B cell (primary cell): ENCODE measurements at regions of chr6 and their contacts with region 1.

Region 1: GRCh38 chr6:43575772-43576551 is at the starts of genes POLH and XPO5:
- DNase-seq: peak; percentile 95
- ATAC-seq: peak; percentile 94
- H3K4me3 ChIP-seq: peak within 1 kb of the TSS; percentile 81 to 99 (median 98)
- H3K4me3 Mint-ChIP-seq: peak within 1 kb of the TSS; percentile 94
- H3K27ac ChIP-seq: peak within 1 kb of the TSS; percentile 49 to 80
- H3K27ac Mint-ChIP-seq: peak within 1 kb of the TSS; percentile 91
- H3K4me1 ChIP-seq: peaks cover 28 to 40% of the 10 kb centered on the region in 2 donors
- H3K4me1 Mint-ChIP-seq: peaks cover 36% of the 10 kb centered on the region
- H3K27me3 ChIP-seq: no peaks in the 10 kb centered on the region
- H3K27me3 Mint-ChIP-seq: no peaks in the 10 kb centered on the region
- CTCF ChIP-seq: no peak
- total RNA-seq, gene POLH: 24.8 and 26.4 TPM in 2 replicates
- total RNA-seq, gene XPO5: 45.7 and 48.1 TPM in 2 replicates

Region 2: GRCh38 chr6:43516697-43517504 is 59.1 kb before region 1 on chr6 and contains the starts of genes POLR1C and YIPF3:
- CTCF ChIA-PET with region 1: no interaction called
- POLR2A ChIA-PET with region 1: no interaction called
- intact Hi-C with region 1: loop called (anchors 2 kb)
- DNase-seq: peak; percentile 97
- ATAC-seq: peak; percentile 96
- H3K4me3 ChIP-seq: peak within 1 kb of the TSS; percentile 78 to 98 (median 91)
- H3K4me3 Mint-ChIP-seq: no peak within 1 kb of the TSS
- H3K27ac ChIP-seq: peak within 1 kb of the TSS; percentile 65 to 91
- H3K27ac Mint-ChIP-seq: no peak within 1 kb of the TSS
- H3K4me1 ChIP-seq: peaks cover 28 to 36% of the 10 kb centered on the region in 2 donors
- H3K4me1 Mint-ChIP-seq: peaks cover 27% of the 10 kb centered on the region
- H3K27me3 ChIP-seq: no peaks in the 10 kb centered on the region
- H3K27me3 Mint-ChIP-seq: no peaks in the 10 kb centered on the region
- CTCF ChIP-seq: no peak
- total RNA-seq, gene POLR1C: 42.0 and 43.3 TPM in 2 replicates
- total RNA-seq, gene YIPF3: 82.1 and 92.6 TPM in 2 replicates

Region 3: DNA sequence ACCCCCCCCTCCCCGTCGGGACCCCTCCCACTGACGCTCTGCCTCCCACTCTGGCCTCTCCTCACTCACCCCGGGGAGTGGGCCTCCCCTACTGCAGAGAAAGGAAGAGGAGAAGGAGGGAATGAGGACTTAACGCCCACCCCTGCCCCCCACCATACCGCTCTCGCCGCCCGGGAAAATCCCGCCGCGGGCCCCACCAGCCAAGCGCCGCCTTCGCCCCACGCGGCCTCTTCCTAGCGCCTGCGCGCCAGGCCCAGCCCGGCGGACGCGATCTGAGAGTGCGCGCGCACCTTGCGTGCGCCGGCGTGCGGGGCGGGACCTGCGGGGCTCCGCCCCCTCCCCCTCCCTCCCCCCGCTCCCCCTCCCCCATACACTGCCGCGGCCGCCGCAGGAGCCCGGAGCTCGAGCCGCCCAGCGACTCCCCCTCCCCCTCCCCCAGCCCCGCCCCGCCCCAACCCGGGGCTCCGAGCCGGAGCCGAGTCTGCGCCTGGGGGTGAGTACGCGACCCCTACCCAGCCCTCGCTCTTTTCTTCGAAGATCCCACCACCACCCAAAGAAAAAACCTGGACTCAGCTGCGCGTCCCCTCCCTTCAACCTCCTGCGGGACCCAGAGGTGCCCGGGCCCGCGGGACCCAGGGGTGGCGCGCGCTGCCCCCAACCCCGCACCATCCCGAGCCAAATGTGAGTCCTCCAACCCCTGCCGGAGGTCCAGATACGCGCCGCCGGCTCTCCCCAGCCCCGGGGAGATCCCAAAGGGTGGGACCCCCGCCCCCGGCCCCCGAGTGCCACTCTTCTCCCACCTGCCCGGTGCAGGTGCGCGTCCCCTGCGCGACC is 551.4 kb after region 1 on chr6 and contains the starts of genes MRPL14 and TMEM63B:
- CTCF ChIA-PET with region 1: no interaction called
- POLR2A ChIA-PET with region 1: no interaction called
- intact Hi-C with region 1: loop called (anchors 5 kb)
- DNase-seq: peak; percentile 94
- ATAC-seq: peak; percentile 91
- H3K4me3 ChIP-seq: peak within 1 kb of the TSS; percentile 62 to 98 (median 91)
- H3K4me3 Mint-ChIP-seq: peak within 1 kb of the TSS; percentile 95
- H3K27ac ChIP-seq: peak within 1 kb of the TSS; percentile 83 to 94
- H3K27ac Mint-ChIP-seq: peak within 1 kb of the TSS; percentile 93
- H3K4me1 ChIP-seq: peaks cover 35 to 47% of the 10 kb centered on the region in 2 donors
- H3K4me1 Mint-ChIP-seq: peaks cover 50% of the 10 kb centered on the region
- H3K27me3 ChIP-seq: no peaks in the 10 kb centered on the region
- H3K27me3 Mint-ChIP-seq: no peaks in the 10 kb centered on the region
- CTCF ChIP-seq: no peak
- total RNA-seq, gene MRPL14: 16.7 and 16.8 TPM in 2 replicates
- total RNA-seq, gene TMEM63B: 18.3 and 19.1 TPM in 2 replicates